PC-9 (cell line): ENCODE measurements at regions of chr5 and their contacts with region 1.

Region 1: DNA sequence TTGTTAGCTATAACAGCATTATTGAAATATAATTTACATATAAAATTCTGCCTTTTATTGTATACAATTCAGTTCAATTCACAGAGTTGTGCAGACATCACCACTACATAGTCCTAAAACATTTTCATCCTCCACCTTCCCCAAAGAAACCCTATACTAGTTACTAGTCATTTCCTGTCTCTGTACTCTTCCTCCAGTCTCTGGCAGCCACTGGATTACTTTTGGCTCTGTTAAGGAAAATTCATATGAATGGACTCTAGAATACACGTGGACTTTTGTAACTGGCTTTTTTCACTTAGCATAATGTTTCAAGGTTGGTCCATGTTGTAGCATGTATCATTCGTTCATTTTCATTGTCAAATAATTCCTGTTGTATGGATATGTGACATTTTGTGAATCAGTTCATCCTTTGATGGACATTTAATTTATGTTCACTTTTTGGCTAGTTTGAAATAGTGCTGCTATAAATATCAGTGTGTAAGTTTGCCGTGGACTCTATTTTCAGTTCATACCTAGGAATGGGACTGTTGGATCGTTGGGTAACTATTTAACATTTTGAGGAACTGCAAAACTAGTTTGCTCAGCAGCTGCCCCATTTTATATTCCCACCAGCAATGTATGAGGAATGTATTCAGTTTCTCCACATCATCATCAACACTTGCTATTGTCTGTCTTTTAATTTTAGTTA is 9.7 kb downstream of the ICE1 start:
- DNase-seq: no peak
- H3K4me3 ChIP-seq: no peak overlapping the region
- H3K27ac ChIP-seq: no peak overlapping the region
- H3K4me1 ChIP-seq: no peaks in the 10 kb centered on the region
- H3K27me3 ChIP-seq: no peaks in the 10 kb centered on the region
- CTCF ChIP-seq: no peak

Region 2: DNA sequence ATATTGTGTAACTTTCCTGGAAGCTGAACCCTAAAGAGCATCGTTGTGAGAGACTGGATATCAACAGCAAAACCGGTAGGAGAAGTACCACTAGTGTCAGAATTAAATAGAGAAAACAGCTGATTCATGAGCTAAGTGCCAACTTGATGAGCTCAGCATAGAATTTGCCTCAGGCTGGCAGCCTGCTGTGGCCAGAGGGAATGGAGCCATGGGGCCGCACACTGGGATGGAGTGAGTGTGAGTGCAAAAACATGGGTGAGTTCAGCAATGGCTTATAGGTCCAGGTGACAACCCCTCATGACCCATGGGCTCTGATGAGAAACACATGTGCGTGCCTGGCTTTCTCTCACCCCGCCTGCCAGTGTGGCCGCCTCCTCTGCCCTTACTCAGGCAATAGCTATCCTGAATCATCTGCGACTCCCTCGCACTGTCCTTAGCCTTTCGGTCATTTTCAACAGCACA is 266.6 kb before region 1 on chr5:
- CTCF ChIA-PET with region 1: interaction called, 12 read pairs
- POLR2A ChIA-PET with region 1: interaction called, 7 read pairs
- intact Hi-C with region 1: no loop called
- DNase-seq: peak; percentile 41 to 55
- H3K4me3 ChIP-seq: no peak overlapping the region
- H3K27ac ChIP-seq: no peak overlapping the region
- H3K4me1 ChIP-seq: no peaks in the 10 kb centered on the region
- H3K27me3 ChIP-seq: no peaks in the 10 kb centered on the region
- CTCF ChIP-seq: no peak